Common myeloid progenitor, CD34-positive (primary cell): ENCODE measurements at regions of chr4 and their contacts with region 1.

Region 1: DNA sequence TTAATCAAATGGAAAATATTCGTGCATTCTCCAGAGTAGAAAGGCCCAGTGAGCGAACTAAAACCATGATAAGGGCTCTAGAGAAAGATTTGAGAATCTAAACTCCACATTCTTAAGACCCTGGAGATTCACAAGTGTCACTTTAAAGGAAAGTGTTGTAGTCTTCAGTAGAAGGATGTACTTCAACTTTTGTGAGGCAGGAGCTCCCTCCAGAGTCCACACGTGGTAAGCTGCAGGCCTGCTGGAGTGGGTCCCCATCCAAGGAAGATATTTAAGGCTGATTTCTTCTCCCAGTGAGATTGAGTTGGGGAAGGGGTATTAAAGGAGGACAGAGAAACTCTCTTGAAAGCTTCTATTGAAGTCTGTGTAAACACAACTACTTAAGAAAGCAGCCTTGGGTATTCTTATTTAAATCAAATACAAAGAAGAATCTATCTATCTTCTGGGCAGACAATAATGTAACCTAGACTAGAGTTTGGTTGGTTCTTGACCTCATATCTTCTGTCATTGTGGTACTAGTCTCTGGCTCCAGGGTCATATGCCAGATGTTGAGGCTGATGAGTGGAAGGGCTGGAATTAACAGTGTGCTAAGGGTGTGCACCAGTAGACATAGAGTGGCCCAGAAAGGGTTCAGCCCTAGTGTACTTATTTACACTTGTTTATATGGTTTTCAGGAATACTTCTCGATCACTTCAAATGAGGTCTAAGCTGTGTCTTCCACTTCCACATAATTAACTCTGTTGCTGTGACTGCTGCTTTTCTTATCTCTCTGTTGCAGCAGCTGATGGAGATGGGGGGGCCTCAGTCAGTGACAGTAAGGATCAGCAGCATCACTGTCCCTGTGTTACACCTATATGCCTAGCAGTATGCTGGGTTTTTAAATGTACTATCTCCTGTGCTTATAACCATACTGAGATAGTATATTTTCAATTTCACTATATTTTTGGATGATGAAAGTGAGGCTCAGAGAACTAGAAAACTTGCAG is 76.1 kb downstream of the HMGB2 start:
- DNase-seq: peak; percentile 68 to 82 (median 78)
- H3K4me3 ChIP-seq: no peak overlapping the region
- H3K27ac ChIP-seq: no peak overlapping the region
- H3K4me1 ChIP-seq: peaks cover 3 to 21% (median 15%) of the 10 kb centered on the region in 4 experiments
- H3K27me3 ChIP-seq: no peaks in the 10 kb centered on the region

Region 2: GRCh38 chr4:172953896-172954568 is 304.0 kb before region 1 on chr4:
- CTCF ChIA-PET with region 1: no interaction called
- POLR2A ChIA-PET with region 1: no interaction called
- DNase-seq: no peak
- H3K4me3 ChIP-seq: no peak overlapping the region
- H3K27ac ChIP-seq: no peak overlapping the region
- H3K4me1 ChIP-seq: no peaks in the 10 kb centered on the region
- H3K27me3 ChIP-seq: peaks cover 0 to 2% (median 0%) of the 10 kb centered on the region in 5 experiments

Region 3: GRCh38 chr4:173019711-173020110 is 238.3 kb before region 1 on chr4:
- CTCF ChIA-PET with region 1: interaction called, 121 read pairs
- POLR2A ChIA-PET with region 1: no interaction called
- DNase-seq: no peak
- H3K4me3 ChIP-seq: no peak overlapping the region
- H3K27ac ChIP-seq: no peak overlapping the region
- H3K4me1 ChIP-seq: peaks cover 2 to 4% (median 4%) of the 10 kb centered on the region in 4 experiments
- H3K27me3 ChIP-seq: no peaks in the 10 kb centered on the region

Region 4: GRCh38 chr4:173025131-173025530 is 232.9 kb before region 1 on chr4:
- CTCF ChIA-PET with region 1: interaction called, 20 read pairs
- POLR2A ChIA-PET with region 1: no interaction called
- DNase-seq: peak; percentile 47 to 75 (median 65)
- H3K4me3 ChIP-seq: no peak overlapping the region
- H3K27ac ChIP-seq: no peak overlapping the region
- H3K4me1 ChIP-seq: peaks cover 2 to 12% (median 11%) of the 10 kb centered on the region in 4 experiments
- H3K27me3 ChIP-seq: no peaks in the 10 kb centered on the region

Region 5: DNA sequence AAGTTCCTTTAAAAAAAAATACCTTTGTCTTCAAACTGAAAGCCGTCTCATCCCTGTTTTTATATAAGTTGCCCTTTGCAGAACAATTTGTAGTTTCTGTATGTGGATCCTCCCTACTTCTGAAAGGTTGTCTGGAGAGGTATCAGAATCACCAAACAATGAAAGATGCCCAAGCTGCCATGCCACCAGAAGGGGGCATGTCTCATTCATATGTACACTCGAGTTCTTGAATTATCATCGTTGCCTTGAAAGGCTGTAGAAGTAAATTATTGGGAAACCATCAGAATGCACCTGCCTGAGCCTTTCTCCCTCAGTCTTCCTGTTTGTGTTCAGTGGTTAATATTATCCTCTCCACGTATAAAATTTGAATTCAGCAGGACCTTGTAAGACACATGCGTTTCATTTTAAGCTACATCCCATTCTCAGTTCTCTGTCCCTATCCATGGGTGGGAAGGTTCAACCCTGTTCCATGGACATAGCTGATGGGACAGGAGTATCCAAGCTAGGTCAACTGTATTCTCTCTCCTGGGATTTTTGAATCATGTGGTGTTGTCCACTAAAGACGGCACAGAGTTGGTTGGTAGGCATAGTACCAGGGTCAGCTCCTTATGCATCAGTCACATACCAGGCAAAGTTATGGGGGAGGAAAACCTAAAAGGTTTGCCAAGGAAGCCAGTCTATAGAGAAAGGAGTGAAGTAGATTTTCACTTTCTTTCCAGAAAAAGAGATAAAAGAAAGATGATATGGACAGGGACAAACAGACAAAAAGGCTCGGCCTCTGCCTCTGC is 65.5 kb before region 1 on chr4:
- CTCF ChIA-PET with region 1: interaction called, 10 read pairs
- POLR2A ChIA-PET with region 1: no interaction called
- DNase-seq: peak; percentile 36 to 57 (median 54)
- H3K4me3 ChIP-seq: peak overlapping the region in 1 of 7 experiments; percentile 2
- H3K27ac ChIP-seq: no peak overlapping the region
- H3K4me1 ChIP-seq: peaks cover 7 to 32% (median 22%) of the 10 kb centered on the region in 4 experiments
- H3K27me3 ChIP-seq: no peaks in the 10 kb centered on the region

Region 6: GRCh38 chr4:173301518-173302201 is 43.6 kb after region 1 on chr4:
- CTCF ChIA-PET with region 1: interaction called, 18 read pairs
- POLR2A ChIA-PET with region 1: no interaction called
- DNase-seq: peak; percentile 74 to 91 (median 87)
- H3K4me3 ChIP-seq: peak overlapping the region in 2 of 7 experiments; percentile 35 to 38
- H3K27ac ChIP-seq: peak overlapping the region in 1 of 2 experiments; percentile 27
- H3K4me1 ChIP-seq: peaks cover 0 to 16% (median 6%) of the 10 kb centered on the region in 4 experiments
- H3K27me3 ChIP-seq: no peaks in the 10 kb centered on the region